ENCODE measurements at regions of chr17 and their contacts with region 1.

Region 1: DNA sequence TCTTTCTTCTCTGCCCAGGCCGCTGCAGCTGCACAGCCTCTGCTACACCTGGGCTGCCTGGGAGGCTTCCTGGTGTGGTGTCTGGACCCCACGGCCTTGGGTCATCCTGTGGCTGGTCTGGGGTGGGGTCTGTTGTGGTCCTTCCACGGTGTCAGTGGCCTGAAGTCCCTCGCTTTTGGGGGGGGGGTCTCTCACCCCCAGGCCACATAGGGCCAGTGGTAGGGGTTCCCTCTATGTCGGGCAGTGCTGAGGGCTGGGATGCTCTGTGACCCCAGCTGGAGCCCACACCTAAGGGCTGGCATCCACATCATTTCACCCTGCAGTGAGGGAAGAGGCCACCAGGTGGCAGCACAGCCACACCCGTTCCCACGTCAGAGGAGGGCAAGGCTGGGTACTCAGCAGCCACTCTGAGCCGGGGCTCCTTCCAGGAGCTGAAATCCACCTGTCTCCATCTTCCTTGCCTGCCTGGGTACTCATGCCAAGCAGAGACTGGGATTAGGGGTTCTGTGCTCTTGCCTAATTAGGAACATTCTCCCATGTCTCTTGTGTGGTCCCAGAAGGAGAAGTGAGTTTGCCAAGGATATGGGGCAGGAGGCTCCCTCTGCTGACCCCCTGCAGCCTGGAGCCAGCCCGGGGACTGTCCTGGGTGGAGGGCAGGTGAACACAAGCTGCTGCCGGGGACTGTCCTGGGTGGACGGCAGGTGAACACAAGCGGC is 13.0 kb downstream of the ENGASE start:
- DNase-seq: peak; percentile 70
- H3K4me3 ChIP-seq: no peak overlapping the region
- H3K27ac ChIP-seq: no peak overlapping the region
- H3K4me1 ChIP-seq: no peaks in the 10 kb centered on the region
- H3K27me3 ChIP-seq: no peaks in the 10 kb centered on the region
- CTCF ChIP-seq: peak; percentile 92

Region 2: DNA sequence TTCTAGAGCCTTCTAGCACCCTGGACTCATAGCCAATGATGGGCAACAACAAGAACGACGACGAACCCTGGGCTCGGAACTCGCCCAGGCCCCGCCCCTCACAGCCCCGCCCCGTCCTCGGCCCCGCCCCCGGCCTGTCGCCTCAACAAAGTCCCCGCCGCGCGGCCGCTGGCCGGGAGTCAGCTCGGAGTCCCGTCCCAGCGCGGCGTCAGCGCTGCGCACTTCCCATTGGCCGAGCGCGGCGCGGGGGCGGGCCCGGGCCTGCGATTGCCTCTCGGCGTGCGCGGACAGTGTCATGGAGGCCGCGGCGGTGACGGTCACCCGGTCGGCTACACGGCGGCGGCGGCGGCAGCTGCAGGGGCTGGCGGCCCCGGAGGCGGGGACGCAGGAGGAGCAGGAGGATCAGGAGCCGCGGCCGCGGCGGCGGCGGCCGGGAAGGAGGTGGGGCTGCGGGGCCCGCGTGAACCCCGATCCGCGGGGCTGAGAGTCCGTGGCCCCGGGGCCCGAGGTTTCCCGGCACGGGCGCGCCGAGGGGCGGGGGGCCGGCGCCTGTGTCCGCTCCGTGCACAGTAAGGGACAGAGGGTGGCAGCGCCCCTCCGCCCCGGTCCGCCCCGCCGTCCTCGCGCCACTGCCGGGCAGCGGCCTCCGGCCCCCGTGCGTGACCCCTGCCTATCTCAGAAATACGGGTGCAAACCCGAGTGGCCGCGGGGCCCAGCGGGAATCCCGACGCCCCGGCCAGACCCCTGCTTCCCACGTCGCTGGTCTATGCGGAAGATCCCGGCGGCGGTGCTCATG is 12.7 kb before region 1 on chr17 and contains the start of gene ENGASE:
- CTCF ChIA-PET with region 1: no interaction called
- POLR2A ChIA-PET with region 1: interaction called, 13 read pairs
- intact Hi-C with region 1: no loop called
- DNase-seq: peak; percentile 95
- H3K4me3 ChIP-seq: peak within 1 kb of the TSS; percentile 82
- H3K27ac ChIP-seq: peak within 1 kb of the TSS; percentile 79
- H3K4me1 ChIP-seq: no peaks in the 10 kb centered on the region
- H3K27me3 ChIP-seq: no peaks in the 10 kb centered on the region
- CTCF ChIP-seq: no peak
- total RNA-seq, gene ENGASE: 24.4 and 33.6 TPM in 2 replicates

Region 3: DNA sequence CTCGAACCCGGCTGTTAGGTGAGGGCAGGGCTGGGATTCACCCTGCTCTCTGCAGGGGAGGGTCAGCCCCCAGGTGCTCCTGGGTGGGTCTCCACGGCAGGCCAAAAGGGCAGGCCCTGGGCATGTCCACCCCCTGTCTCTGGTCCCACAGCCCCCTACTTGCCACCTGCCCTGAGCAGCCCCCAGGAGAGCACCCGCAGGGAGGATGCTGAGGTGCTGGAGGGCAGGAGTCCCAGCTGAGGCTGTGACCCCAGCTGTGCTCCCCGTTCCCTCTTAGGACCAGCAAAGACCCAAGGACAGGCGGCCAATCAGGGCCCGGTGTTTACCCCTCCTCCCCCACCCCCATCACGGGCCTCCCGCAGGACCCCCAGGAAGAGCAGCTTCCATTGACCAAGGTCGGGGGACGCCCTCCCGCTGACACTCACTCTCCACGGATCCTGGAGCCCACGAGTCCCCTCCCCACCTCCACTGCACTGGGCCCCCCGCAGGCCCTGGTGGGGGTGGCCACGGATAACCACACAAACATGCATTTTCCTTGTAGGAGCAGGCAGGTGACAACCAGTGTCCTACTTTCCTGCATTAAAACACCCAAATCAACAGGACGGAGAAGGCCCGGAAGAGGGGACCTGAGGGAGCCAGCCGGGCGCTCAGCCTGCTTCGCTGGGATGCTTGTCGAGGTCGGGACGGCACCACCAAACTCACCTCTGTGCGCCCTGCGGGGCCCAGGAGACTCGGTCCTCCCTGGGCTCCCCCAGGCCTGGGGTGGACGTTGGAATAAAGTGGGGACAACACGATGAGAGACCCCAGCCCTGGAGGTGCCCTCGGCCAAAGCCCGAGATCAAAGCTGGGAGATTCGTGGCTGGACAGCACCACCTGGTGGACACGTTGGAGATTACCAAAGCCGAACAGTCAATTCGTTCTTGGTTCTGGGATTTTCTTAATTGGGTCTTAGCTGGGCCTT is 620.6 kb after region 1 on chr17:
- CTCF ChIA-PET with region 1: interaction called, 7 read pairs
- POLR2A ChIA-PET with region 1: no interaction called
- intact Hi-C with region 1: loop called (anchors 5 kb)
- DNase-seq: peak; percentile 55
- H3K4me3 ChIP-seq: peak overlapping the region; percentile 23
- H3K27ac ChIP-seq: no peak overlapping the region
- H3K4me1 ChIP-seq: no peaks in the 10 kb centered on the region
- H3K27me3 ChIP-seq: no peaks in the 10 kb centered on the region
- CTCF ChIP-seq: peak; percentile 79

Measured in A673 (cell line).